A549 (cell line): ENCODE measurements at regions of chr11 and their contacts with region 1.

Region 1: GRCh38 chr11:47407746-47408590 is at the start of gene SLC39A13:
- DNase-seq: peak; percentile 96 to 97
- ATAC-seq: peak; percentile 87 to 93
- H3K4me3 ChIP-seq: peak within 1 kb of the TSS; percentile 92
- H3K27ac ChIP-seq: peak within 1 kb of the TSS; percentile 89 to 93
- H3K4me1 ChIP-seq: peaks cover 19% of the 10 kb centered on the region
- CTCF ChIP-seq: peak; percentile 78
- EP300 ChIP-seq: no peak
- POLR2A ChIP-seq: peak; percentile 87
- RAD21 ChIP-seq: peak; percentile 63 to 84
- polyA plus RNA-seq, gene SLC39A13: 10.8 and 11.7 TPM in 2 replicates

Region 2: DNA sequence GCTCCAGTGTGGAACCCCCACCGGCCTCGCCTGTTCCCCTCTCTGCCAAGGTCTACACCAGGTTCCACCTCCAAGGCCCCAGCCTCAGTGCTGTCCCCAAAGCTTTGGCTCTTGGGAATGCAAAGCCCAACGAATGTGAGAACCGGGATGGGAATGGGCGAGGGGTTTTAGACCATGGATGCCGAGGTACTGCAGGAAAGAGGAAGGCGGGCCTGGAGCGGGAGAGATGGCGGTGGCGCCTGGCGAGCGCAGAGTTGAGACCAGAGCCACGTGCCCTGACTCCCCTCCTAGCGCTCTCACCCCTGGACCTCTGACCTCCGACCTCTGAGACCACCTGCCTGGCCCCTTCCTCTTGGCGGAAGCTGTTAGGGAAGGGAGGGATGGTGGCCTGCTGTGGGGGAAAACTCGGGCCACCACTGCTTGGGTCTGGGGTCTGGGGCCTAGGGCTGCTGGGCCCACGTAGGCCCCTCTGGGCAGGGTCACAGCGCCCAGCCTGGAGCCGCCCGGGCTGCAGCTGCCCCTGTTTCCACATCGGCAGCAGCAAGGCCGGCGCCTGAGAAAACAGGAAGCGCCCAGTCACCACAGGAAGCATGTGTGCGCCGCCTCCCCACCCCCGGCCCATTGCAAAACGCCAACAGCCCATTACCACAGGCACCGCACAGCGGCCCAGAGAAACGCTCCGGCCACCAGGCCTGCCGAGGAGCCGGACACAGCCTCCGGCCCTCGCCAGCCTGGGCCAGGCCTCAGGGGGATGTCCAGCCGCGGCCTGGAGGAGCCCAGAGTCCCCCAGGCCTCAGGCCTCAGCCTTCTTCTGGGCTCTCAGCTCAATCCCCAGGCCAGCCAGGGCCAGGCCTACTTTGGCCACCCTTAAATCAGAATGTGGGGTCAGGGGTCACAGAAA is 13.4 kb before region 1 on chr11:
- CTCF ChIA-PET with region 1: interaction called, 14 read pairs
- POLR2A ChIA-PET with region 1: interaction called, 4 read pairs
- DNase-seq: no peak
- ATAC-seq: no peak
- H3K4me3 ChIP-seq: no peak overlapping the region
- H3K27ac ChIP-seq: peak overlapping the region in 1 of 2 experiments; percentile 22; a peak in 1 of 6 replicates
- H3K4me1 ChIP-seq: no peaks in the 10 kb centered on the region
- CTCF ChIP-seq: no peak
- EP300 ChIP-seq: no peak
- POLR2A ChIP-seq: no peak
- RAD21 ChIP-seq: no peak

Region 3: GRCh38 chr11:47426061-47426956 is 18.3 kb after region 1 on chr11 and contains the start of gene PSMC3:
- CTCF ChIA-PET with region 1: interaction called, 75 read pairs
- POLR2A ChIA-PET with region 1: interaction called, 7 read pairs
- DNase-seq: peak; percentile 92 to 97
- ATAC-seq: peak; percentile 92 to 94
- H3K4me3 ChIP-seq: peak within 1 kb of the TSS; percentile 68
- H3K27ac ChIP-seq: peak within 1 kb of the TSS; percentile 88 to 92
- H3K4me1 ChIP-seq: peaks cover 14% of the 10 kb centered on the region
- CTCF ChIP-seq: no peak
- EP300 ChIP-seq: no peak
- POLR2A ChIP-seq: peak; percentile 49
- RAD21 ChIP-seq: no peak
- polyA plus RNA-seq, gene PSMC3: 201 and 283 TPM in 2 replicates

Region 4: DNA sequence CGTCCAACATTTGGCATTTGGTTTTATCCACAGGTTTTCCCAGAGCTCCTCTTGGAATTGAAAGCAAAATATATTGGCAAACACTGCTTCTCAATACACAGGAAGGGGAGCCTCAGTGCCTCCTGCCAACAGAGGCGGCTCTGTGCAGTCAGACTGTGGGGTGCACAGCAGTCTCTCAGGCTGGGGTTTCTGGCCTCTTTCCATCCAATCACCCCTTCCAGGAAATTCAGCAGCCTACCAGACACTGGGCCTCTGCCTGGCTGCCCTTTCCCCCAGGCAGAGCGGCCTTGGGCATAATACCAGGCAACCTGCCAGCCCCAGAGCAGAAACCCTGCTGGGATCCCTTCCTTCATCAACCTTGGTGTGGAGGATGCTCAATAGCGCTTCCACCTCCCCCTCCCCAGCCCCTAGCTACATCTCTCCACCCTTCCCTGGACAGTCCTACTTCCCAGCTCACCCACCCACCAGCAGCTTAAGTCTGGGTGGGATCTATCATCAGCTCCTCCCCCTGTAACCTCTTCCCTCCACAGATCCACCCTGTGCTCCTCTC is 58.8 kb after region 1 on chr11:
- CTCF ChIA-PET with region 1: no interaction called
- POLR2A ChIA-PET with region 1: no interaction called
- DNase-seq: no peak
- ATAC-seq: peak in 1 of 2 experiments; percentile 41; a peak in 3 of 6 replicates
- H3K4me3 ChIP-seq: no peak overlapping the region
- H3K27ac ChIP-seq: peak overlapping the region in 1 of 2 experiments; percentile 58; a peak in 2 of 6 replicates
- H3K4me1 ChIP-seq: peaks cover 12% of the 10 kb centered on the region
- CTCF ChIP-seq: no peak
- EP300 ChIP-seq: no peak
- POLR2A ChIP-seq: no peak
- RAD21 ChIP-seq: no peak

Region 5: DNA sequence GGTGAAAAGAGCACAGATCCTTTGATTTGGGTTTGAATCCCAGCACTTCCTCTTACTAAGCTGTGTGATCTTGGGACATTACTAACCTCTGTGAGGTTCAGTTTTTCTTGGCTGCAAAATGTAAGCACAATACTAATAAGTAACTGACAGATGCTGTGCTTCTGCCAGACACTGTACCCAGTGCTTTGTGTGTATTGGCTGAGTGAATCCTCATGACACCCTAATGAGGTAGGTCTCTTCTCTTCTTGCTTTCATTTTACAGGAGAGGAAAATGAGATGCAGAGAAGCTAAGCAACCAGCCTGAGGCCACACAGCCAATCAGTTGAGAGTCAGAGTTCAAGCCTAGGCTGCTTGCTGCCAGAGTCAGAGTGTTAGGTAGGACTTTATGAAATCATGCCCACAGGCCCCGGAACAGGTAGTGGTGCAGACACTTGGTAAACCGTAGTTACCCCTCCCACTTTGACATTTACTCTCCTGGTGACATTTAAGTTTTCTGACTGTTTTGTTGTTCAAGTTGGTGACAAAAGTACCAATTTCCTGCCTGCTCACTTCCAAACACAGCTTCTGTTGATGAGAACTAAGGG is 593.6 kb after region 1 on chr11:
- CTCF ChIA-PET with region 1: no interaction called
- POLR2A ChIA-PET with region 1: no interaction called
- DNase-seq: peak; percentile 36 to 84
- ATAC-seq: peak; percentile 41 to 71
- H3K4me3 ChIP-seq: no peak overlapping the region
- H3K27ac ChIP-seq: peak overlapping the region; percentile 86 to 100
- H3K4me1 ChIP-seq: peaks cover 100% of the 10 kb centered on the region
- CTCF ChIP-seq: no peak
- EP300 ChIP-seq: no peak
- POLR2A ChIP-seq: no peak
- RAD21 ChIP-seq: no peak; a peak in 1 of 5 replicates